ENCODE measurements at regions of chr5 and their contacts with region 1.

Region 1: DNA sequence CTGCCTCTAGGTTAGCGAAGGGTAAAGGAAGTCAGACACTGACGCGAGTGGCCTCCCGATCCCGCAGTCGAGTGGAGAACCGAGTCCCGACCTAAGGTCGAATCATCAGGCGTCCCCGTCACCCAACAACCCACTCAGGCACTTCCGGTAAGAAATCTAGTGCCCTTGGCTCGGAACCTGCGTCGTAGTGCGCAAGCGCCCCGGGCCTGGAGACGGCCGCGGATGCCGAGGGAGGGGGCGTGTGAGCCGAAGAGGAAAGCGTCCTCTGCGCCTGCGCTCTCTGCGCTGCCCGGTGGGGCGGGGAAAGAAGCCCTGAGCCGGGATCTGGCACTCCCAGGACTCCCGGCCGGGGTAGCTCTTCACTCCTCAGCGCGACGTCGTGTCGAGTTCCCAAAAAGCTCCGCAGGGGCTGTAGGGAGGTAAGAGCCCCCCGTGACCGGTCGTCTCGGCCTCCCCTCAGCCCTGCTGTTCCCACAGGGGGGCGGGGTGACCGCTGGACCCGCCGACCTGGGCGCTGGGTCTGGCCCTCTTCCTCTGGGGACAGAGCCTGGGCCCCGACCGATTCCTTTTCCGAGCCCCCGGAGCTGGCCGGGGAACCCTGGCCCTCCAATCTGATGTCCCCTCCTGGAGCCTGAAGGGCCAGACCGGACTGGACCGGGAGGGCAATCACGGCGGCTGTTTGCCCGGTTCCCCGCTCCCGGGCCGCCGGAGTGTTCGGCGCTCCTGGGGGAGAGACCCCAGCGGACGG is at the start of gene ZFYVE16:
- DNase-seq: peak; percentile 98
- H3K4me3 ChIP-seq: peak within 1 kb of the TSS; percentile 90 to 94
- H3K27ac ChIP-seq: peak within 1 kb of the TSS; percentile 95 to 97
- H3K4me1 ChIP-seq: no peaks in the 10 kb centered on the region
- H3K27me3 ChIP-seq: no peaks in the 10 kb centered on the region
- CTCF ChIP-seq: peak in 2 of 4 experiments; percentile 48 to 57
- POLR2A ChIP-seq: peak; percentile 86
- total RNA-seq, gene ZFYVE16: 29.4 to 41.1 TPM

Region 2: GRCh38 chr5:80487829-80488721 is 80.2 kb after region 1 on chr5 and contains the start of gene FAM151B:
- intact Hi-C with region 1: loop called (anchors 5 kb)
- DNase-seq: peak; percentile 94
- H3K4me3 ChIP-seq: peak within 1 kb of the TSS; percentile 53 to 64
- H3K27ac ChIP-seq: peak within 1 kb of the TSS; percentile 82 to 88
- H3K4me1 ChIP-seq: no peaks in the 10 kb centered on the region
- H3K27me3 ChIP-seq: no peaks in the 10 kb centered on the region
- CTCF ChIP-seq: peak in 1 of 4 experiments; percentile 44
- POLR2A ChIP-seq: peak; percentile 52
- total RNA-seq, gene FAM151B: 3.2 to 3.3 TPM